CD8-positive, alpha-beta T cell (primary cell): ENCODE measurements at regions of chr2 and their contacts with region 1.

Region 1: GRCh38 chr2:25673300-25674076 is at the start of gene DTNB:
- DNase-seq: peak; percentile 52 to 91 (median 77)
- ATAC-seq: peak; percentile 73
- H3K4me3 ChIP-seq: peak within 1 kb of the TSS; percentile 75 to 76
- H3K4me3 Mint-ChIP-seq: peak within 1 kb of the TSS; percentile 88
- H3K27ac ChIP-seq: peak within 1 kb of the TSS; percentile 62 to 70
- H3K27ac Mint-ChIP-seq: peak within 1 kb of the TSS; percentile 83
- H3K4me1 ChIP-seq: peaks cover 15% of the 10 kb centered on the region
- H3K4me1 Mint-ChIP-seq: peaks cover 33% of the 10 kb centered on the region
- H3K27me3 ChIP-seq: no peaks in the 10 kb centered on the region
- H3K27me3 Mint-ChIP-seq: no peaks in the 10 kb centered on the region
- CTCF ChIP-seq: no peak
- total RNA-seq, gene DTNB: 27.1 to 33.2 TPM

Region 2: DNA sequence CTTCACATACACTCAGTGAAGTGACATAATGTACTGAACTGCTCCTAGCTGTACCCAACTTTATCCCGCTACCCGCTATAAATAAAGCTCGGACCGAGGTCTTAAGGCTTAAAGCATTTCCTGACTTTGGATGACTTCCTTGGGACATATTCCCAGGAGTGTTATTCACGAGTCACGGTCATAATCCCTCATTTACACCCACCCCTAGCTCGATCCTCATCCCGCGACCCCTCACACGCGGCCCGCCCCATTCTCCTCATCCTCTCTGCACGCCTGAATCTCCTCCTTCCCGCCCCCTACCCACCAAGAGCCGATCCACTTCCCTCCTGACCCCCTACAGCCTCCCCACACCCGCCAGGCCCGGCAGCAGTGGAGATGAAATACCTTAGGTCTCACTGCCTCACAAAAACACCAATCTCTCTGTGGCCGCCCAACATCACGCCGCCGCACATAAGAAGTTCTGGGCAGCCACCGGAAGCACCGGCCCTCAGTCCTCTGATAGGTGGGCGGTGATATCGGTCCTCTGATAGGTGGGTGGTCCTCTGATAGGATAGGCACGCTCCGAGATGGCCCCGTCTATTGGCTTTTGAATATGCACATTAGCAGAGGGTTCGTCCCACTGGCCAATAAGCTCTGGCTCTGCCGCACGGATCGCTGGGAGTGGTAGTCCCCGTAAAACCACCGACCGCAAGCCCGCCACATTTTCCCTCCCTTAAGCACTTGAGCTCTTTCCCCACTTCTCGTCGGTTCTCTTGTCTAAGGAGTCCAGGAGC is 1626.4 kb before region 1 on chr2 and contains the start of gene WDCP:
- CTCF ChIA-PET with region 1: no interaction called
- POLR2A ChIA-PET with region 1: no interaction called
- intact Hi-C with region 1: loop called in 1 of 2 experiments (anchors 5 kb)
- DNase-seq: peak; percentile 81 to 98 (median 92)
- ATAC-seq: peak; percentile 98
- H3K4me3 ChIP-seq: peak within 1 kb of the TSS; percentile 80 to 87
- H3K4me3 Mint-ChIP-seq: peak within 1 kb of the TSS; percentile 93
- H3K27ac ChIP-seq: peak within 1 kb of the TSS; percentile 54 to 56
- H3K27ac Mint-ChIP-seq: peak within 1 kb of the TSS; percentile 90
- H3K4me1 ChIP-seq: peaks cover 21% of the 10 kb centered on the region
- H3K4me1 Mint-ChIP-seq: peaks cover 35% of the 10 kb centered on the region
- H3K27me3 ChIP-seq: no peaks in the 10 kb centered on the region
- H3K27me3 Mint-ChIP-seq: peaks cover 2% of the 10 kb centered on the region
- CTCF ChIP-seq: no peak
- total RNA-seq, gene WDCP: 3.7 to 4.8 TPM

Region 3: DNA sequence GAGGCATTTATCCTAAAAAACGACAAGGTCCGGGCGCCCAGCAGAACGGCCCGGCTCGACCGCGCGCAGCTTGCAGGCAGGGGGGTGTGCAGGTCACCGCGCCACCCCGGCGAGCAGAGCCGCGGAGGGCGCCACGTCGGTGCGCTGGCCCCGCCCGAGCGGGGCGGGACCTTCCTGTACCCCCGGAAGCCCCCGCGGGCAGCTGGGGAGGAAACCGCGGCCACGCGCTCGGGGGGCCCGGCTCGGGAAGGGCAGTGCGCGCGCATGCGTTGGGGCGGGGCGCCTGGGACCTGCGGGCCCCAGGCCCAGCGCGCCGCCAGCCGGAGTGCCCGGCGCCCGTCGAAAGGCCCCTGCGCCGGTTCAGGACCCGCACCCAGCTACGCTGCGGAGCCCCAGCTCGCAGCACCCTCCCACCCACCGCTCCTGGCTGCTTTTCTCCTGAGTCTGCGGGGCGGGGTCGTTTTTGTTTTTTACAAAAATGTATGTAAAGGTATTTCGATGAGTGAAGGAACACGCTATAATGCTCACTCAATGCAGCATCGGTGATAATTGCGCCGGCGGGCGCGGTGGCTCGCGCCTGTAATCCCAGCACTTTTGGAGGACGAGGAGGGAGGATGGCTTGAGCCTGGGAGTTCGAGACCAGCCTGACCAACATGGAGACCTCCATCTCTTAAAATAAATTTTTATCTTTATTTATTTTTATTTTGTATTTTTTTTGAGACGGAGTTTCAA is 457.4 kb before region 1 on chr2:
- CTCF ChIA-PET with region 1: no interaction called
- POLR2A ChIA-PET with region 1: no interaction called
- intact Hi-C with region 1: loop called in 1 of 2 experiments (anchors 5 kb)
- DNase-seq: peak; percentile 64 to 96 (median 88)
- ATAC-seq: peak; percentile 95
- H3K4me3 ChIP-seq: peak overlapping the region; percentile 59 to 72
- H3K4me3 Mint-ChIP-seq: peak overlapping the region; percentile 77
- H3K27ac ChIP-seq: peak overlapping the region; percentile 68 to 72
- H3K27ac Mint-ChIP-seq: peak overlapping the region; percentile 80
- H3K4me1 ChIP-seq: peaks cover 7% of the 10 kb centered on the region
- H3K4me1 Mint-ChIP-seq: peaks cover 10% of the 10 kb centered on the region
- H3K27me3 ChIP-seq: no peaks in the 10 kb centered on the region
- H3K27me3 Mint-ChIP-seq: no peaks in the 10 kb centered on the region
- CTCF ChIP-seq: no peak

Region 4: DNA sequence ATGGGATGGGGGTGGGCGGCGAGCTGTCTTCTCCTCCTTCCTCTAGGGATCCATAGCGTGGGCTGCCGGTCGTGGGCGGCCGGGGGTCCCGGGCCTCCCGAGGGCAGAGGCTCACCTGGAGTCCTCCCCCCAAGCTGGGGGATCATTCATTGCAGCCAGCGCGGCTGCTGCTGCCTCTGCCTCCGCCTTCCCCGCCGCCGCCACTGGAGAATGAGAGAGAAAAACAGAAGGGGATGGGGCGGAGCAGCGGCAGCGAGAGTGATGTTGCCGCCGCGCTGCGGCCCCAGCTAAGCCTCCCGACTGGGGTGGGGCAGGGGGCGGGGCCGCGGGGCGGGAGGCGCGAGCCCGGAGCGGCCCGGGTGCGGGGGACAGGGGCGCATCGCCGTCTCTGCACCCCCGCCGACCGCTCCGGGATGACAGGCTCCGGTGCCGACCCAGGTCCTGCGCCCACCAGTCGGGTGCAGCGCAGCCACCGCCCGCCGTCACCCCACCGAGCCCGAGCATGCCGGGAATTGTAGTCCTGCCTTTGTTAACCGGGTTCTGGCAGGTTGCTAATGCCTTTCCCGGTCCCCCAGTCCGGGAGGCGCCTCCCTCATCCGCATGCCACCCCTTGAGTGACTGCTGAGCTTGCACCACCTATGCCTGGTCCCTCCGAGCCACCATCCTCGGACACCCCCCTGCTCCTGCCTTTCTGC is 308.9 kb after region 1 on chr2 and contains the start of gene KIF3C:
- CTCF ChIA-PET with region 1: no interaction called
- POLR2A ChIA-PET with region 1: no interaction called
- intact Hi-C with region 1: loop called (anchors 2 kb)
- DNase-seq: peak; percentile 46 to 84 (median 76)
- ATAC-seq: peak; percentile 92
- H3K4me3 ChIP-seq: peak within 1 kb of the TSS; percentile 61 to 81
- H3K4me3 Mint-ChIP-seq: peak within 1 kb of the TSS; percentile 88
- H3K27ac ChIP-seq: peak within 1 kb of the TSS; percentile 26 to 28
- H3K27ac Mint-ChIP-seq: peak within 1 kb of the TSS; percentile 79
- H3K4me1 ChIP-seq: peaks cover 11% of the 10 kb centered on the region
- H3K4me1 Mint-ChIP-seq: peaks cover 17% of the 10 kb centered on the region
- H3K27me3 ChIP-seq: no peaks in the 10 kb centered on the region
- H3K27me3 Mint-ChIP-seq: no peaks in the 10 kb centered on the region
- CTCF ChIP-seq: no peak
- total RNA-seq, gene KIF3C: 1.5 to 2.3 TPM

Region 5: GRCh38 chr2:26184555-26185303 is 511.2 kb after region 1 on chr2:
- CTCF ChIA-PET with region 1: no interaction called
- POLR2A ChIA-PET with region 1: no interaction called
- intact Hi-C with region 1: loop called (anchors 5 to 10 kb)
- DNase-seq: peak; percentile 76 to 95 (median 87)
- ATAC-seq: peak; percentile 98
- H3K4me3 ChIP-seq: peak overlapping the region; percentile 61 to 76
- H3K4me3 Mint-ChIP-seq: peak overlapping the region; percentile 88
- H3K27ac ChIP-seq: peak overlapping the region; percentile 39 to 50
- H3K27ac Mint-ChIP-seq: no peak overlapping the region
- H3K4me1 ChIP-seq: peaks cover 9% of the 10 kb centered on the region
- H3K4me1 Mint-ChIP-seq: peaks cover 23% of the 10 kb centered on the region
- H3K27me3 ChIP-seq: no peaks in the 10 kb centered on the region
- H3K27me3 Mint-ChIP-seq: peaks cover 11% of the 10 kb centered on the region
- CTCF ChIP-seq: peak; percentile 70